ENCODE measurements at regions of chr2 and their contacts with region 1.

Region 1: GRCh38 chr2:25411281-25411680 is 69.6 kb upstream of the DNMT3A start:
- DNase-seq: no peak
- ATAC-seq: no peak
- H3K4me3 ChIP-seq: no peak overlapping the region
- H3K4me3 Mint-ChIP-seq: no peak overlapping the region
- H3K27ac ChIP-seq: no peak overlapping the region
- H3K27ac Mint-ChIP-seq: no peak overlapping the region
- H3K4me1 ChIP-seq: peaks cover 0 to 2% of the 10 kb centered on the region in 2 experiments
- H3K4me1 Mint-ChIP-seq: peaks cover 0 to 6% (median 0%) of the 10 kb centered on the region in 3 donors
- H3K27me3 ChIP-seq: peaks cover 0 to 2% of the 10 kb centered on the region in 2 experiments
- H3K27me3 Mint-ChIP-seq: no peaks in the 10 kb centered on the region

Region 2: GRCh38 chr2:25436935-25437334 is 25.7 kb after region 1 on chr2:
- CTCF ChIA-PET with region 1: no interaction called
- POLR2A ChIA-PET with region 1: interaction called in 1 of 2 experiments, 14 read pairs
- DNase-seq: no peak
- ATAC-seq: no peak
- H3K4me3 ChIP-seq: no peak overlapping the region
- H3K4me3 Mint-ChIP-seq: no peak overlapping the region
- H3K27ac ChIP-seq: no peak overlapping the region
- H3K27ac Mint-ChIP-seq: no peak overlapping the region
- H3K4me1 ChIP-seq: peaks cover 0 to 2% of the 10 kb centered on the region in 2 experiments
- H3K4me1 Mint-ChIP-seq: no peaks in the 10 kb centered on the region
- H3K27me3 ChIP-seq: no peaks in the 10 kb centered on the region
- H3K27me3 Mint-ChIP-seq: no peaks in the 10 kb centered on the region

Region 3: DNA sequence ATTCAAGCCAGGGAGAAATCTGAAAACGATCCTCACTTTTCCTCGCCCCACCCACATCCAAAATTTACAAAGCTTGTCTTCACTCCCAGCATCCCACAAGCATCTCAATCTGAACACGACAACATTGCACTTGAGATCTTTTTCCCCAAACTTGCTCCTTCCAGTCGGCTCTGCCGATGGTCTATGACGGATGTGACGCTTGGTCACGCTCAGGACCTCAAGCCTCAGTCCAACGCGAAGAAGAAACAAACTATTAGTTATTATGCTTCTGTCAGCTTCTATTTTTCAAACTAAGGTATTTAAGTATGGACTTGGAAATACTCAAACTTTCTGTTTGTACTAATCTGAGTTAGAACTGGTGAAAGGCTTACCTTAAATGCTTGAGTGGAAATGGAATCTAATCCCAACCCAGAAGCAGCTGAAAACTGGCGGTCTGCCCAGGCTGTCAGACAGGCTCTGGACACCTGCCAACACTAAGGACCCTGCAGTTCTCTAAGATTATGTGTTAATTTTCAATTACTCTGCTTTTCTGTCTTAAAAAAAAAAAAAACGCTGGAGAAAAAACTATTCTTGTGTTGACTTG is 62.6 kb after region 1 on chr2:
- CTCF ChIA-PET with region 1: no interaction called
- POLR2A ChIA-PET with region 1: no interaction called
- DNase-seq: no peak
- ATAC-seq: no peak
- H3K4me3 ChIP-seq: no peak overlapping the region
- H3K4me3 Mint-ChIP-seq: no peak overlapping the region
- H3K27ac ChIP-seq: no peak overlapping the region
- H3K27ac Mint-ChIP-seq: no peak overlapping the region
- H3K4me1 ChIP-seq: no peaks in the 10 kb centered on the region
- H3K4me1 Mint-ChIP-seq: no peaks in the 10 kb centered on the region
- H3K27me3 ChIP-seq: no peaks in the 10 kb centered on the region
- H3K27me3 Mint-ChIP-seq: no peaks in the 10 kb centered on the region

Region 4: GRCh38 chr2:25529034-25529433 is 117.8 kb after region 1 on chr2:
- CTCF ChIA-PET with region 1: no interaction called
- POLR2A ChIA-PET with region 1: no interaction called
- DNase-seq: no peak
- ATAC-seq: no peak
- H3K4me3 ChIP-seq: no peak overlapping the region
- H3K4me3 Mint-ChIP-seq: no peak overlapping the region
- H3K27ac ChIP-seq: no peak overlapping the region
- H3K27ac Mint-ChIP-seq: no peak overlapping the region
- H3K4me1 ChIP-seq: no peaks in the 10 kb centered on the region
- H3K4me1 Mint-ChIP-seq: peaks cover 0 to 10% (median 5%) of the 10 kb centered on the region in 3 donors
- H3K27me3 ChIP-seq: no peaks in the 10 kb centered on the region
- H3K27me3 Mint-ChIP-seq: no peaks in the 10 kb centered on the region

Region 5: GRCh38 chr2:25558262-25558661 is 147.0 kb after region 1 on chr2:
- CTCF ChIA-PET with region 1: no interaction called
- POLR2A ChIA-PET with region 1: interaction called in 1 of 2 experiments, 10 read pairs
- DNase-seq: peak in 6 of 35 experiments; percentile 3 to 37 (median 5)
- ATAC-seq: peak; percentile 78 to 93 (median 85)
- H3K4me3 ChIP-seq: no peak overlapping the region
- H3K4me3 Mint-ChIP-seq: no peak overlapping the region
- H3K27ac ChIP-seq: peak overlapping the region; percentile 32
- H3K27ac Mint-ChIP-seq: peak overlapping the region; percentile 11 to 72
- H3K4me1 ChIP-seq: peaks cover 0 to 9% of the 10 kb centered on the region in 2 experiments
- H3K4me1 Mint-ChIP-seq: peaks cover 27 to 39% (median 28%) of the 10 kb centered on the region in 3 donors
- H3K27me3 ChIP-seq: no peaks in the 10 kb centered on the region
- H3K27me3 Mint-ChIP-seq: no peaks in the 10 kb centered on the region

Region 6: DNA sequence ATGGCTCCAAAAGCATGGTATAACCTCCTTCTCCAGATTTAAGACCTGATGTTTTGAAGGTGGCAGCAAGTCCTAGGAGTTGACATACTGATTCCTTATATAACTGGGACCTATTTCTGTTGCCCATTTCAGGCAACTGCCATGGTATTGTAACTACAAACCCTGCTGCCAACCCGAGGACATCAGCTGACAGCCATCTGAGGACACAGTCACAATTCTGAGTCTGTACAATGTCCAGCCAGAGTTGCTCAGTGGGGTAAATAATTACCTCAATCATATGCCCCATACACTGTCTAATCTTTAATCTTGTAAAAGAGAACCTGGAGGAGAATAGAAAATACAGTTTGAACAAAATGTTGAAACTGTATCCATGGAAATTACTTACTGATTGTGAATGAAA is 753.0 kb after region 1 on chr2:
- CTCF ChIA-PET with region 1: no interaction called
- POLR2A ChIA-PET with region 1: interaction called in 1 of 2 experiments, 13 read pairs
- DNase-seq: no peak
- ATAC-seq: no peak
- H3K4me3 ChIP-seq: no peak overlapping the region
- H3K4me3 Mint-ChIP-seq: no peak overlapping the region
- H3K27ac ChIP-seq: no peak overlapping the region
- H3K27ac Mint-ChIP-seq: no peak overlapping the region
- H3K4me1 ChIP-seq: no peaks in the 10 kb centered on the region
- H3K4me1 Mint-ChIP-seq: no peaks in the 10 kb centered on the region
- H3K27me3 ChIP-seq: no peaks in the 10 kb centered on the region
- H3K27me3 Mint-ChIP-seq: peaks cover 0 to 1% of the 10 kb centered on the region in 2 donors

Measured in T-cell (primary cell).